ENCODE measurements at regions of chr15 and their contacts with region 1.

Region 1: DNA sequence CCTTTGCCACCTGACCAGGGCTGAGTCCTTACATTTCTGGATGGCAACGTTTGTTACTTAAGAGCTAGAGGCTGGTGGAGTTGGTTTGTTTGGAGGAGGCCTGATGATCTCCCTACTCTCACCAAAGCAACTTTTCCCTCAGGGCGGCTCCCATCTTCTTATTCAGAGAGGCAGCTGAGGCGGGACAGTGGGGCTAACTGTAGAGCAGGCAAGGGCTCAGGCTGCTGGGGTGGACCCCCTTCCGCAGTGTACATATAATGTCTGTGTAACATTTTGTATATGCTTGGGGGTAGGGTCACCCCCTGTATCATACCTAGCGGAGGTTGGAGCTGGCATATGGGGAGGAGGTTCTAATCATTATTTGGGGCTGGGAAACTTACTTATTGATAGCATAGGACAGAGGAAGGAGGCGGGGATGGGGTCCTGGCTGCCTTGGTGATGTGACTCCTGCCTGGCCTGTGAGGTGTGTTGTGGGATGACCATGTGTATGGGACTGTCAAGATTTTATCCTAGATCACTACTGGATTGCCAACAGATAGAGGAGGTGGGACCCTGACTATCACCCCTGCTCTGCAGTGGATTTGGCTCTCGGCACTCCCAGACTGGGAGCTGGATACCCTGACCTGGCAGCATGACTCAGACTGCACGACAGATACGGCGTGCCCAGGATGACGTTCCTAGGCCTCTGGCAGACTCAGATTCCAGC is 52.5 kb upstream of the UBE2Q2 start:
- DNase-seq: no peak
- H3K4me3 ChIP-seq: no peak overlapping the region
- H3K27ac ChIP-seq: no peak overlapping the region
- H3K4me1 ChIP-seq: no peaks in the 10 kb centered on the region
- H3K27me3 ChIP-seq: peaks cover 10% of the 10 kb centered on the region
- CTCF ChIP-seq: no peak

Region 2: GRCh38 chr15:75738647-75739331 is 52.0 kb before region 1 on chr15:
- CTCF ChIA-PET with region 1: no interaction called
- dilution Hi-C with region 1: no loop called
- in situ Hi-C with region 1: loop called in 1 of 2 experiments (anchors 10 kb)
- intact Hi-C with region 1: no loop called
- DNase-seq: peak; percentile 87
- H3K4me3 ChIP-seq: peak overlapping the region; percentile 71 to 90 (median 74)
- H3K27ac ChIP-seq: no peak overlapping the region
- H3K4me1 ChIP-seq: peaks cover 5% of the 10 kb centered on the region
- H3K27me3 ChIP-seq: no peaks in the 10 kb centered on the region
- CTCF ChIP-seq: no peak

Region 3: GRCh38 chr15:75857886-75858285 is 67.1 kb after region 1 on chr15:
- CTCF ChIA-PET with region 1: no interaction called
- dilution Hi-C with region 1: no loop called
- in situ Hi-C with region 1: no loop called
- intact Hi-C with region 1: no loop called
- DNase-seq: no peak
- H3K4me3 ChIP-seq: no peak overlapping the region
- H3K27ac ChIP-seq: no peak overlapping the region
- H3K4me1 ChIP-seq: no peaks in the 10 kb centered on the region
- H3K27me3 ChIP-seq: no peaks in the 10 kb centered on the region
- CTCF ChIP-seq: no peak